Tibial artery (tissue), 4 donors: ENCODE measurements at regions of chr4 and their contacts with region 1.

Region 1: GRCh38 chr4:14916554-14917297 is 85.6 kb upstream of the CPEB2 start:
- DNase-seq: no peak
- H3K4me3 ChIP-seq: no peak overlapping the region
- H3K27ac ChIP-seq: no peak overlapping the region
- H3K4me1 ChIP-seq: peaks cover 0 to 7% (median 3%) of the 10 kb centered on the region in 4 donors
- H3K27me3 ChIP-seq: no peaks in the 10 kb centered on the region
- CTCF ChIP-seq: no peak

Region 2: DNA sequence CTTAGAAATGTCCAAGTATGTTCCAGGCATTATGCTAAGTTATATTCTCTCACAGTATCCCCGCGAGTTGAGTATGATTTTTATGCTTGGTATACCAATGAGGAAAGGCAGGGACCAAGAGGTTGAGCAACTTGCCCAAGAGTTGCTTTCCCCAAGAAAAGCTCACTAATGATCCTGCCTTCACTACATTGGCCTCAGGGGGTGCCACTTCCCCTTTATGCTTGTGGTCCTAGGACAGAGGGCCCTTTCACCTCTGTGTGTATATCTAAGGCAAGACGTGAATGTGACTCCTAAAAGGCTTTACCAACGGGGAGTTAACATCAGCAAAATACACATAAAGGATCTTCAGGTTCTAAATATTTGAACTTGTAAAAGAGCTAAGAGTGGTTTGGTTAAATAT is 78.9 kb before region 1 on chr4:
- intact Hi-C with region 1: loop called (anchors 5 kb)
- DNase-seq: no peak
- H3K4me3 ChIP-seq: no peak overlapping the region
- H3K27ac ChIP-seq: no peak overlapping the region
- H3K4me1 ChIP-seq: peaks cover 0 to 19% (median 13%) of the 10 kb centered on the region in 4 donors
- H3K27me3 ChIP-seq: no peaks in the 10 kb centered on the region
- CTCF ChIP-seq: no peak